Activated CD4-positive, alpha-beta T cell treated with anti-CD3 and anti-CD28 coated beads, Interleukin-2, amount 10 ng/mL, durations not matched to agents 24 days and 14 days (primary cell): ENCODE measurements at regions of chr11 and their contacts with region 1.

Region 1: DNA sequence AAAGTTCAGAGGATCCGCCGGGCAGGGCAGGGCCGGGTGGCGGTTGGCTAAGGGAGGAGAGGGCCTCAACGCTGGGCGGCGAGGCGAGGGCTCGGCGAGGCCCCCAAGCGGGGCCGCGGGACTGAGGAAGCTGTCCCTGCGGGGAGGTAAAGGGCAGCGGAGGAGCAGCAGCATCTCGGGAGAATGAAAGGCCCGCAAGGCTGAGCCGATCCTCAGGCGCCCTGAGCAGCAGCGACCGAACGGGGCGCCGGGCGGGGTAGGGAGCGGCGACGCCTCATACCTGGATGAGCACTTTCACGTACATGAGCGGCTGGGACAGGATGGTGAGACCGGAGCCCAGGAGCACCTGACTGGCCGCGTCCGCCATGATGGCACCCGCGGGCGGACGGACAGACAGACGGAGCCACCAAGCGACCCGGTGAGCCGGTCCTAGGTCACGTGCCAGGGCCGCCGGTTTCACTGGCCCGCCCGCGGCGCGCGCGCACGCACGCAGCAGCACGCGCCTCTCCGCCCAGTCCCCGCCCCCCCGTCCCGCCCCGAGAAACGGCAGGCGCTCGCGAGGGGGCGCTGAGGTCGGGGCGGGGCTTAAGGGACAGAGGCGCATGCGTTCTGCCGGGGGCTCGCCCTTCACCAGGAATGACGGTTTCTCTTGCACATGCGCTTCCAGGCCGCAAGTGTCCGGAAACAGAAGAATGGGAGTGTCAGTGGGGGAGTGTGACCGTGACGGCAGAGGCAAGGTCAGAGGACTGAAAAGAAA is at the start of gene MTCH2:
- DNase-seq: peak; percentile 99
- H3K4me3 Mint-ChIP-seq: peak within 1 kb of the TSS; percentile 98
- H3K27ac Mint-ChIP-seq: peak within 1 kb of the TSS; percentile 98
- H3K4me1 Mint-ChIP-seq: peaks cover 15% of the 10 kb centered on the region
- H3K27me3 Mint-ChIP-seq: no peaks in the 10 kb centered on the region
- total RNA-seq, gene MTCH2: 128 and 136 TPM in 2 replicates

Region 2: GRCh38 chr11:47111318-47111804 is 530.9 kb before region 1 on chr11:
- intact Hi-C with region 1: no loop called
- DNase-seq: no peak
- H3K4me3 Mint-ChIP-seq: no peak overlapping the region
- H3K27ac Mint-ChIP-seq: no peak overlapping the region
- H3K4me1 Mint-ChIP-seq: no peaks in the 10 kb centered on the region
- H3K27me3 Mint-ChIP-seq: peaks cover 8% of the 10 kb centered on the region

Region 3: DNA sequence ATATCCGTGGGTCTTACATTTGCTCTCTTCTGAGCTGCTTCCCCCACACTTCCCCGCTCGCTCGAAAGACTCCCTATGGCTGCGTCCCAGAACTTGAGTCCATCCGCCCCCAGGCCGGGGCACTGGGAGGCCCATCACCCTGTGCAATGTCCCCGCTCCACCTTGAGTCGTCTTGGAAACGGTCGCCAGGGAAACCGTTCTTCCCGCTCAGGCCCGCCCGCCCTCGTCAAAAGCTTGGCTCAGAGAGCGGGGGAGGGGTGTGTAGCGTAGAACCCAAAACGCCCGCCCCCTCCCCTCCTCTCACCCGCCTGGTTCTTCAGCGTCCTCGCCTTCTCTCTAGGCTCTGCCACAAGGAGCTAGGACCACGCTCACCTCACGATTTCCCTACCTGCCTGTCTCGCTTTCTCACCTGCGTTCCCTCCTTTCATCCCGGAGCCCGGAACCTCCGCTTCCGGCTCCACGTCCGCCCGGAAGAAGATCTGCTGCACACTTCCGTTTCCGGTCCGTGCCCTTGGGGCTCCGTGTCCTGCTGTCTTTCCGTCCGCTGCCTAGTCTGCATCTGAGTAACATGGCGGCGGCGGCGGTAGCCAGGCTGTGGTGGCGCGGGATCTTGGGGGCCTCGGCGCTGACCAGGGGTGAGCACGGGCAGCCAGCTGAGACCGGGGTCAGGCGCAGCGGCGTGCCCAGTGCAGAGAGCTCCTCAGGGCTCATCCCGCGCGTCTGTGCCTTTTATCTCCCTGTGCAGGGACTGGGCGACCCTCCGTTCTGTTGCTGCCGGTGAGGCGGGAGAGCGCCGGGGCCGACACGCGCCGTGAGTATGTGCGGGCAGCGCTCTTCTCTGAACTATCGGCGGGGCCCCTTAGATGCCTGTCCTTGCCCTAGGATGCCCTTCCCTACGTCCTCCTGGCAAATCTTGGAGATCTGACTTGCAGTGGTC is 63.5 kb before region 1 on chr11 and contains the starts of genes KBTBD4 and NDUFS3:
- intact Hi-C with region 1: loop called (anchors 1 kb)
- DNase-seq: peak; percentile 98
- H3K4me3 Mint-ChIP-seq: peak within 1 kb of the TSS; percentile 94
- H3K27ac Mint-ChIP-seq: peak within 1 kb of the TSS; percentile 96
- H3K4me1 Mint-ChIP-seq: peaks cover 27% of the 10 kb centered on the region
- H3K27me3 Mint-ChIP-seq: no peaks in the 10 kb centered on the region
- total RNA-seq, gene KBTBD4: 16.4 and 16.7 TPM in 2 replicates
- total RNA-seq, gene NDUFS3: 151 and 159 TPM in 2 replicates

Region 4: DNA sequence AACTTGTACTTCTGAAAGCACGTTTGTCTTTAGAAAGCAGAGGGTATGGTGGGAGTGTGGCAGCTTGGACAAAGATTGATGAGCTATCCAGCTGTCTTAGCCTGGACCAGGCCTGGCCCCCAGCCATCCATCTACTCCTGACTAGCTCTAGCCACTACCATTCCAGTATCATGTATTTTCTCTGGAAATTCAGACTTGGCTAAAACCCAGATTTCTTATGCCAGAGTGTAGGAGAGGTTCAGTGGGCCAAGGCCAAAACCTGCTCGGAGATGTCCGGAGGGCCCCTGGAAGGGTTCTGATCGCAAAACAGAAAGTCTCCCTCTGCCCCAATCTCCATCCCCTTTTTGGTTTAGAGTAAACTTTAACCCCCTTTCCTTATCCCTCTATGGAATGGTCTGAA is 24.9 kb after region 1 on chr11:
- intact Hi-C with region 1: loop called (anchors 1 kb)
- DNase-seq: no peak
- H3K4me3 Mint-ChIP-seq: no peak overlapping the region
- H3K27ac Mint-ChIP-seq: peak overlapping the region; percentile 16
- H3K4me1 Mint-ChIP-seq: peaks cover 9% of the 10 kb centered on the region
- H3K27me3 Mint-ChIP-seq: no peaks in the 10 kb centered on the region

Region 5: GRCh38 chr11:47715082-47715669 is 72.9 kb after region 1 on chr11 and contains the start of gene AGBL2:
- intact Hi-C with region 1: loop called (anchors 1 kb)
- DNase-seq: peak; percentile 97
- H3K4me3 Mint-ChIP-seq: peak within 1 kb of the TSS; percentile 91
- H3K27ac Mint-ChIP-seq: peak within 1 kb of the TSS; percentile 94
- H3K4me1 Mint-ChIP-seq: peaks cover 18% of the 10 kb centered on the region
- H3K27me3 Mint-ChIP-seq: no peaks in the 10 kb centered on the region
- total RNA-seq, gene AGBL2: 4.2 and 4.5 TPM in 2 replicates

Region 6: DNA sequence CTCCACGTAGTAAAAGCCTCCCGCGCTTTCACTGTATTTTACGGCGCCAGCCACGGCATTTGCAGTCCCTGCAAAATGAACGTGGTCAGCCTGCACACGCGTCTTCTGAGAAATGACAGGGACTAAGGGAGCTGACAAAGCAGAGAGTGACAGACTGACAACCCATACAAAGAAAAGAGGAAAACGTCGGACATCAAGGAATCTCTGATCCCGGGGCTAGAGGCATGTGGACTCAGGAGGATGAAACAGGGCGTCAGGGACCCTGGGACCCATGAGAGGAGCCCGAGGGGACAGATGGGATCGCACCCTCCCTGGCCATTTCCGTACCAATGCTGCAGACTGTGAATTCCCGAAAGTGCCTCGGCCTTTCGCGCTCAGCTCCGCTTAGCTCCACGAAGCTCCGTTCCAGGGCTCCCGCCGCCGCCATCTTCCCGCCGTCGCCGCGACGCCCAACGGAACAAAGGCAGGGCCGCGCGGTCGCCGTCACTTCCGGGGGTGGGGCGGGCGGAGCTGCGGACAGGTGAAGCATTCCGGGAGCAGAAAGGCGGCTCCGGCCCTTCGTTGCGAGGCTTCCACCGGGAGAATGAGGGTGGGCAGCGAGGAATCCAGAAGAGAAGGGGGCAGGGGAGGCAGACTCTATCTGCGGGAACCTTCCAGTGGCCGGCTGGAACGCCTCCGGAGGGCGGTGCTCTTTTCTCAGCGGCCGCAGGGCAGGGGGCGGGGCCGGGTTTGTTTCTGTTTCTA is 205.8 kb after region 1 on chr11 and contains the start of gene NUP160:
- intact Hi-C with region 1: loop called (anchors 5 kb)
- DNase-seq: peak; percentile 98
- H3K4me3 Mint-ChIP-seq: peak within 1 kb of the TSS; percentile 99
- H3K27ac Mint-ChIP-seq: peak within 1 kb of the TSS; percentile 99
- H3K4me1 Mint-ChIP-seq: peaks cover 38% of the 10 kb centered on the region
- H3K27me3 Mint-ChIP-seq: no peaks in the 10 kb centered on the region
- total RNA-seq, gene NUP160: 102 and 104 TPM in 2 replicates

Region 7: DNA sequence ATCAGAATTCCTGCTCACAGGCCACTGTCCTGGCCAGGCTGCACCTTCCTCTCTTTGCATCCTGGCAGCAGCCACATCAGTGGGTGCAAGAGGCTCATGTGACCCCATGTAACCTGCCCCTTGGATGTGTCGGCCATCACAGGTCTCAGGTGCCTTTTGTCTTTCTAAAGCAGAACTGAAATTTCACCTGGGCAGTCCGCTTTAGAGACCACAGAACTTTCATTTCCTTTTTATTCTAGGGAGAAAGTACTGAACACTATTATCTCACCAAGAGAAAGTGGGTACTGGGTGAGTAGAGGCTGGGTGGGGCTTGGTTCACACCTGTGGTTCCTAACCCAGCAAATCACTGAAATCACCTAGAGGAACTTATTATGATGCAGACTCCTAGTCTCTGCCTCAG is 257.5 kb after region 1 on chr11:
- intact Hi-C with region 1: no loop called
- DNase-seq: no peak
- H3K4me3 Mint-ChIP-seq: no peak overlapping the region
- H3K27ac Mint-ChIP-seq: no peak overlapping the region
- H3K4me1 Mint-ChIP-seq: peaks cover 4% of the 10 kb centered on the region
- H3K27me3 Mint-ChIP-seq: peaks cover 10% of the 10 kb centered on the region